ENCODE measurements at regions of chrX and their contacts with region 1.

Region 1: DNA sequence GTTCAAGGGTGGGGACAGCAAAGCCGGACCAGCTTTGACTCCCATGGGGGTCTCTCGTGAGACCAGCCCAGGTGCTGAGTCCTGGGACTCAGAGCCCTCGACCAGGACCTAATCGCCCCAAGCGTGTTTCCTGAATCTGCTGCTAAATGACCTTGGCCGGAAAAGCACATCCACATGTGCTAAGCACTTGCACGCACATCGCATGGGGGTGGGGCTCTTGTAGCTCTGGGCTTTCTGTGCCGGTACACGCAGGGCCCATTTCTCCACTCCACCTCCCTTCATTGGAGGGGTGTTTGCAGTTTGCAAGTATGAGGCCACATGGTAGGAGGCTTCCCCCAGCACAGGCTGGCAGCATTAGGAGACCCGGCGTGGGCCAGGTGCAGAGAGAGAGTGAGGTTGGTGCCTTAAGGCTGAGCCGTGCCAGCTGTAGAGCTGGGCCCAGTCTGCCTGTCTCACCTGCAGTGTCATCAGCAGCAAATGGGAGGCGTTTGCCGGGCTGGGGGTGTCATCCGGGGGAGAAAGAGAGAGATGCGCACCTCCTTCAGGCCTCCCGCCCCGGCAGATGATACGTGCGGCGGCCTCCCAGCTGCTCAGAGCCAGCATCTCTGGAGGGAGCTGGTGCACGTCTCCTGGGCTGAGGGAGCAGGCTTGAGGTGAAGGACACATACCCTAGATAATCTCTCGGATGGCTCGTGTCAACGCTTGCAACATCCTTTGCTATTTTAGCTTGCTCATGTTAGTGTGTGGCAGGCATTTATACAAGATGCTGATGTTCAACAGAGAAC is 45.2 kb upstream of the CLCN4 start:
- DNase-seq: peak; percentile 27 to 84 (median 64)
- ATAC-seq: peak; percentile 69
- H3K4me3 ChIP-seq: peak overlapping the region; percentile 23 to 44
- H3K4me3 Mint-ChIP-seq: peak overlapping the region; percentile 89
- H3K27ac ChIP-seq: peak overlapping the region; percentile 77 to 79
- H3K27ac Mint-ChIP-seq: peak overlapping the region; percentile 100
- H3K4me1 ChIP-seq: peaks cover 63% of the 10 kb centered on the region
- H3K4me1 Mint-ChIP-seq: peaks cover 71% of the 10 kb centered on the region
- H3K27me3 ChIP-seq: no peaks in the 10 kb centered on the region
- H3K27me3 Mint-ChIP-seq: no peaks in the 10 kb centered on the region
- CTCF ChIP-seq: no peak

Region 2: DNA sequence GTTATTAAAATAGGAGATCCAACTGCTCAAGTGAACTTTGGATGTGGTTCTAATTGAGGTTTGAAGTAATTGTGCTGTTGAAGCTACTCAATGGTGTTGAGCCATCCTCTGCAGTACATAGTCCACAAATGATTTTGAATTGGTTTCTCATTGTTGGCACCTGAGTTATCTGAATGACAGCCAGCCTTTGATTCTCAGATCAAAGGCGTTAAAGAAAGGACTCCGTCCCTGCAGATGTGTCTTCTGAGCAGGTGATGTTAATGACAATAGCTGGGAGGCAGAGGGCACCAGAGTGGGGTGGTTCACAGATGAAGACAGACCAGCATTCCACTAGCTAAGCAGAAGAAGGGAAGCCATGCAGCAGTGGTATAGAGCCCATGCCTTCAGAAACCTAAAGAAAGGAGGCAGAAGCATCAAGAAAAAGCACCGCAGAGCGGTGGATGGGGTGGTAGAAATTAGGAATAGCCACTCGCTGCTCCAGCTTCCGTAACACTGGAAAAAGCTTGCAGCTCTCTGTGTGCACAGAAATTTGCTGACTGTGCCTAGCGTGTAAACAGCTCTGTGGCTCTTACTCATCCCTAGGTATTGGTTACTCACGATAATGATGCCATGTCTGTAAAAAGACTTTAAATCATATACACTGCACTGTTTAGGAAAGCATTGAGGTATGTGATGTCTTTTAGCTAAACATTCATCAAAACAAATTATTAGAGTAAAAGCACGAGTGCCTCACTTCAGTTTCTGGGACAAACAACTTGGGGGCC is 33.9 kb before region 1 on chrX:
- CTCF ChIA-PET with region 1: interaction called, 68 read pairs
- POLR2A ChIA-PET with region 1: interaction called, 34 read pairs
- intact Hi-C with region 1: no loop called
- DNase-seq: peak in 2 of 9 experiments; percentile 40 to 55
- ATAC-seq: peak; percentile 68
- H3K4me3 ChIP-seq: no peak overlapping the region
- H3K4me3 Mint-ChIP-seq: no peak overlapping the region
- H3K27ac ChIP-seq: no peak overlapping the region
- H3K27ac Mint-ChIP-seq: no peak overlapping the region
- H3K4me1 ChIP-seq: no peaks in the 10 kb centered on the region
- H3K4me1 Mint-ChIP-seq: peaks cover 8% of the 10 kb centered on the region
- H3K27me3 ChIP-seq: no peaks in the 10 kb centered on the region
- H3K27me3 Mint-ChIP-seq: no peaks in the 10 kb centered on the region
- CTCF ChIP-seq: no peak

Region 3: GRCh38 chrX:10083809-10084208 is 27.7 kb before region 1 on chrX:
- CTCF ChIA-PET with region 1: interaction called, 7 read pairs
- POLR2A ChIA-PET with region 1: interaction called, 34 read pairs
- intact Hi-C with region 1: no loop called
- DNase-seq: no peak
- ATAC-seq: no peak
- H3K4me3 ChIP-seq: no peak overlapping the region
- H3K4me3 Mint-ChIP-seq: no peak overlapping the region
- H3K27ac ChIP-seq: peak overlapping the region in 1 of 2 experiments; percentile 86
- H3K27ac Mint-ChIP-seq: peak overlapping the region; percentile 88
- H3K4me1 ChIP-seq: peaks cover 21% of the 10 kb centered on the region
- H3K4me1 Mint-ChIP-seq: peaks cover 45% of the 10 kb centered on the region
- H3K27me3 ChIP-seq: no peaks in the 10 kb centered on the region
- H3K27me3 Mint-ChIP-seq: no peaks in the 10 kb centered on the region
- CTCF ChIP-seq: no peak

Region 4: GRCh38 chrX:10098270-10098713 is 13.3 kb before region 1 on chrX:
- CTCF ChIA-PET with region 1: interaction called, 8 read pairs
- POLR2A ChIA-PET with region 1: interaction called, 18 read pairs
- intact Hi-C with region 1: loop called (anchors 1 kb)
- DNase-seq: peak in 7 of 9 experiments; percentile 29 to 77 (median 55)
- ATAC-seq: peak; percentile 86
- H3K4me3 ChIP-seq: peak overlapping the region; percentile 61 to 76
- H3K4me3 Mint-ChIP-seq: peak overlapping the region; percentile 94
- H3K27ac ChIP-seq: peak overlapping the region; percentile 78 to 83
- H3K27ac Mint-ChIP-seq: peak overlapping the region; percentile 97
- H3K4me1 ChIP-seq: peaks cover 18% of the 10 kb centered on the region
- H3K4me1 Mint-ChIP-seq: peaks cover 55% of the 10 kb centered on the region
- H3K27me3 ChIP-seq: no peaks in the 10 kb centered on the region
- H3K27me3 Mint-ChIP-seq: no peaks in the 10 kb centered on the region
- CTCF ChIP-seq: no peak

Region 5: DNA sequence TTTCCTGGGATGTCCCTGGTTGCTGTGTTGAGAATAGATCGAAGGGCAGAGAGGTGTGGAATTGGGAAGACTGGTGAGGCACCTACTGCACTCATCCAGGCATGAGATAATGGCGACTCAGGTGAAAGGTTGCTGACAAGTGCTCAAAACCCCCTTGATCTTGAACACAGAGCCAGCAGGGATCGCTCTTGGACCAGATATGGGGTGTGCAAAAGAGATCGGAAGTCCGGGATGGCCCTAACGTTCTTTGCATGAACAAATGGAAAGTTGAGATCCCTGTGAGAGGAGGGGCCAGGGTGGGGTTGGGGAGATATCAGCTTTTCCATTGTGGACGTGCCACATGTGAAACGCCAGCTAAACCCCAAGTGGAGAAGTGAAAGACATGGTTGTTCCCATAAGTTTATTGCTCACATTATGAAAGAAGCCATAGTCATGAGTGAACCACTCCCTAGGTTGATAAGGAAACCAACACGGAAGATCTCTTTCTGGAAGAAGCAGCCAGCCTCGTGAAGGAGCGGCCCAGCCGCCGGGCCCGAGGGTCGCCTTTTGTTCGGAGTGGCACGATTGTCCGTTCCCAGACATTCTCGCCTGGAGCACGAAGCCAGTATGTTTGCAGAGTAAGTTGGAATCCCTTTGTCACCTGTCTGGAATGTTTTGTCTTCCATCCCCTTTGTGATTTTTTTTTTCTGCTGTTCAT is 22.6 kb after region 1 on chrX:
- CTCF ChIA-PET with region 1: no interaction called
- POLR2A ChIA-PET with region 1: no interaction called
- intact Hi-C with region 1: no loop called
- DNase-seq: no peak
- ATAC-seq: no peak
- H3K4me3 ChIP-seq: no peak overlapping the region
- H3K4me3 Mint-ChIP-seq: no peak overlapping the region
- H3K27ac ChIP-seq: no peak overlapping the region
- H3K27ac Mint-ChIP-seq: no peak overlapping the region
- H3K4me1 ChIP-seq: no peaks in the 10 kb centered on the region
- H3K4me1 Mint-ChIP-seq: no peaks in the 10 kb centered on the region
- H3K27me3 ChIP-seq: no peaks in the 10 kb centered on the region
- H3K27me3 Mint-ChIP-seq: no peaks in the 10 kb centered on the region
- CTCF ChIP-seq: no peak

Region 6: GRCh38 chrX:10367406-10367805 is 255.8 kb after region 1 on chrX:
- CTCF ChIA-PET with region 1: no interaction called
- POLR2A ChIA-PET with region 1: no interaction called
- intact Hi-C with region 1: no loop called
- DNase-seq: no peak
- ATAC-seq: no peak
- H3K4me3 ChIP-seq: no peak overlapping the region
- H3K4me3 Mint-ChIP-seq: no peak overlapping the region
- H3K27ac ChIP-seq: no peak overlapping the region
- H3K27ac Mint-ChIP-seq: no peak overlapping the region
- H3K4me1 ChIP-seq: no peaks in the 10 kb centered on the region
- H3K4me1 Mint-ChIP-seq: no peaks in the 10 kb centered on the region
- H3K27me3 ChIP-seq: no peaks in the 10 kb centered on the region
- H3K27me3 Mint-ChIP-seq: no peaks in the 10 kb centered on the region
- CTCF ChIP-seq: no peak

Region 7: GRCh38 chrX:10569921-10570320 is 458.4 kb after region 1 on chrX:
- CTCF ChIA-PET with region 1: no interaction called
- POLR2A ChIA-PET with region 1: no interaction called
- intact Hi-C with region 1: no loop called
- DNase-seq: no peak
- ATAC-seq: no peak
- H3K4me3 ChIP-seq: no peak overlapping the region
- H3K4me3 Mint-ChIP-seq: no peak overlapping the region
- H3K27ac ChIP-seq: no peak overlapping the region
- H3K27ac Mint-ChIP-seq: no peak overlapping the region
- H3K4me1 ChIP-seq: no peaks in the 10 kb centered on the region
- H3K4me1 Mint-ChIP-seq: no peaks in the 10 kb centered on the region
- H3K27me3 ChIP-seq: no peaks in the 10 kb centered on the region
- H3K27me3 Mint-ChIP-seq: no peaks in the 10 kb centered on the region
- CTCF ChIP-seq: no peak

Region 8: DNA sequence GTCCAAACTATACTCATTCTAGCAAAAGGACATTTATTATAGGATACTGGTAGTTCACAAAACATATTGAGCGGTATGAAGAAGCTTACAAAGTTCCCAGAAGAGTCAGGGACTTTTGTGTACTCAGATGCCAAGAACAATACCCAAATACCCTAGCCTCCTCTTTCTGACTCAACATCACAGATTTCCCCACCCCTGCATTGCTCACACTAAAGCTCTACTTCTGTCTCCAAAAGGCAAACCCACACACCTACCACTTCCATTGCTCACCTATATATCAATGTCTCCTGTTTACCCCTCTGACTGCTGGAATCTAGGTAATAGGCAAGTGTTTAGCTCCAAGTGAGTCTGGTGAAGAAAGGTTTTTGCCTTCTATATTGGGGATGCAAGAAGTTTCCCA is 898.9 kb after region 1 on chrX:
- CTCF ChIA-PET with region 1: no interaction called
- POLR2A ChIA-PET with region 1: no interaction called
- intact Hi-C with region 1: no loop called
- DNase-seq: no peak
- ATAC-seq: no peak
- H3K4me3 ChIP-seq: no peak overlapping the region
- H3K4me3 Mint-ChIP-seq: no peak overlapping the region
- H3K27ac ChIP-seq: no peak overlapping the region
- H3K27ac Mint-ChIP-seq: no peak overlapping the region
- H3K4me1 ChIP-seq: no peaks in the 10 kb centered on the region
- H3K4me1 Mint-ChIP-seq: no peaks in the 10 kb centered on the region
- H3K27me3 ChIP-seq: no peaks in the 10 kb centered on the region
- H3K27me3 Mint-ChIP-seq: no peaks in the 10 kb centered on the region
- CTCF ChIP-seq: no peak

Measured in CD8-positive, alpha-beta T cell (primary cell).